Esophagus muscularis mucosa (tissue), 4 donors: ENCODE measurements at regions of chr7 and their contacts with region 1.

Region 1: GRCh38 chr7:148575640-148576411 is 14.7 kb upstream of the C7orf33 start:
- DNase-seq: no peak
- H3K4me3 ChIP-seq: no peak overlapping the region
- H3K27ac ChIP-seq: no peak overlapping the region
- H3K4me1 ChIP-seq: no peaks in the 10 kb centered on the region
- H3K27me3 ChIP-seq: no peaks in the 10 kb centered on the region
- CTCF ChIP-seq: peak; percentile 72 to 85 (median 75)
- EP300 ChIP-seq: no peak
- POLR2A ChIP-seq: no peak

Region 2: GRCh38 chr7:148773334-148773733 is 197.5 kb after region 1 on chr7:
- intact Hi-C with region 1: loop called (anchors 10 kb)
- DNase-seq: no peak
- H3K4me3 ChIP-seq: no peak overlapping the region
- H3K27ac ChIP-seq: no peak overlapping the region
- H3K4me1 ChIP-seq: no peaks in the 10 kb centered on the region
- H3K27me3 ChIP-seq: no peaks in the 10 kb centered on the region
- CTCF ChIP-seq: no peak
- EP300 ChIP-seq: no peak
- POLR2A ChIP-seq: no peak